CD8-positive, alpha-beta T cell (primary cell): ENCODE measurements at regions of chr10 and their contacts with region 1.

Region 1: DNA sequence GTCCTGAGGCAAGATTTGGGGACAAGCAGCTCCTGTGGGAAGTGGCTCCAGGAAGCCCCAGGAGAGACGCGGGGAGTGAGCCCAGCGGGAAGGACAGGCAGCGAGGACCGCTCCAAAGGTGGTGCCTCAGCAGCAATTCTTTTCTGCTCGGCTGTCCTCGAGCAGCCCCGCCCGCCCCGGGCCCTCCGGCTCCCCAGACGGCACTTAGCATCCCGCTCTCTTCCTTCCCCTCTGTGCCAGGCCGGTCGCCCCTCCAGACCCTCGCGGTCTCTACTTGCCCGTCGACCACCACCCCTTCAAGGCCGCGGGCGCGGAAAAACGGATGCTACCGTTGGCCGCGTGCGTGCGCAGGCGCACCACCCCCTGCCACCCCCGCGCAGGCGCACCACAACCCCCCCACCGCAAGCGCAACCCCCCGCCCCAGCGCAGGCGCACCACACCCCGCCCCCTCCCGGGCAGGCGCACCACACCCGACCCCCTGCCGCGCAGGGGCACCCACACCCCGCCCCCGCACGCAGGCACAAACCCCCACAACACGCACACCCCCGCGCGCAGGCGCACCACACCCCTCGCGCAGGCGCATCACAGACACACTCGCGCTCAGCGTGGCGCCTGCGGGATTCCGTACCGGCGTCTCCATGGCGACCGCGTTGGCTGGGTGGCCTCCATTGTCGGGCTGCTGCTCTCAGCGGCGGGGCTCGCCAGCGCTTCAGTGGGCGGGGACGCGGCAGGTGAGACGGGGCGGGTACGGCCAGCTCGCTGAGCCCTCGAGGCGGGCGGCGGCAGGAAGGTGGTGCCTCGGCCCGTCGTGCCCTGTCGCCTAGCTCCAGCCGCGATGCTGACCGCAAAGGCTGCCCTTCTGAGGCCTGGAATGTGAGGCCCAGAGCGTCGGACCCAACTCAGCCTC is at the start of gene LRRC27:
- DNase-seq: peak; percentile 99 to 100 (median 100)
- ATAC-seq: peak; percentile 90
- H3K4me3 ChIP-seq: peak within 1 kb of the TSS; percentile 77 to 90
- H3K4me3 Mint-ChIP-seq: peak within 1 kb of the TSS; percentile 84
- H3K27ac ChIP-seq: peak within 1 kb of the TSS; percentile 68 to 83
- H3K27ac Mint-ChIP-seq: peak within 1 kb of the TSS; percentile 91
- H3K4me1 ChIP-seq: peaks cover 31% of the 10 kb centered on the region
- H3K4me1 Mint-ChIP-seq: peaks cover 58% of the 10 kb centered on the region
- H3K27me3 ChIP-seq: no peaks in the 10 kb centered on the region
- H3K27me3 Mint-ChIP-seq: no peaks in the 10 kb centered on the region
- CTCF ChIP-seq: no peak
- total RNA-seq, gene LRRC27: 0.68 to 3.2 TPM

Region 2: GRCh38 chr10:131708225-131708880 is 623.4 kb before region 1 on chr10:
- CTCF ChIA-PET with region 1: no interaction called
- POLR2A ChIA-PET with region 1: no interaction called
- intact Hi-C with region 1: no loop called
- DNase-seq: no peak
- ATAC-seq: no peak
- H3K4me3 ChIP-seq: no peak overlapping the region
- H3K4me3 Mint-ChIP-seq: no peak overlapping the region
- H3K27ac ChIP-seq: no peak overlapping the region
- H3K27ac Mint-ChIP-seq: no peak overlapping the region
- H3K4me1 ChIP-seq: no peaks in the 10 kb centered on the region
- H3K4me1 Mint-ChIP-seq: no peaks in the 10 kb centered on the region
- H3K27me3 ChIP-seq: peaks cover 0 to 6% of the 10 kb centered on the region in 2 experiments
- H3K27me3 Mint-ChIP-seq: peaks cover 4% of the 10 kb centered on the region
- CTCF ChIP-seq: no peak

Region 3: DNA sequence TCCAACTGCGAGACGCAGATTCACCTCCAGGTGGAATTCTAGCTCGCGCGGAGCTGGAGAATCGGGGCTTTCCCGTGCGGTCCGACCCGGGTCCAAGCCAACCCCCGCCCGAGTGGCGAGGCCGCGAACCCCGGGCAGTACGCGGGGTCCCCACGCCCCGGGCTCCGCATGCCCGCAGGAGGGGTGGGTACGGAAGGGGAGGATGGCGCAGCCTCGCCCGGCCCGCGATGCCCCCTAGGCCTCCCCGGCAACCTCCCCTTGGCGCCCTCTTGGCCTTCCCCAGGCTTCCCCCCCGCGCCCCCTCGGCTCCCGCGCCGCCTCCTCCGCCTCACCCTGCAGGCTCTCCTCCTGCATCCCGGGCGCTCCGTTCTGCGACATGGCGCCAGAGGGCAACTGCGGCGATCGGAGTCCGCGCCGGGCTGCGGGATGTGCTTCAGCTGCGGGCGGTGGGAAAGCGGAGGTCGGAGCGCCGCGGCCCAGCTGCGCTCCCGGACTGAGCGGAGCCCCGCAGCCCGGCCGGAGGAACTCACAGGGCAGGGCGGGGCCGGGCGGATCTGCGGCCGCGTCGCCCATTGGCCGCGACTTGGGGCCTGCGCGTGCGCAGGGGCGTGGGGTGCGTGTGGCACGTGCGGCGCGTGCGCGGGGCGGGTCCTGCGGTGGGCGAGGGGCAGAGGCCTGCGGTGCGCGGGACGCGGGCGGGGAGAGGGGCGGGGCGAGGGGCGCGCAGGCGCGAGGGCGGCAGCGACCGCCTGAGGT is 350.2 kb before region 1 on chr10 and contains the start of gene BNIP3:
- CTCF ChIA-PET with region 1: no interaction called
- POLR2A ChIA-PET with region 1: no interaction called
- intact Hi-C with region 1: loop called (anchors 5 to 10 kb)
- DNase-seq: peak; percentile 84 to 98 (median 94)
- ATAC-seq: peak; percentile 90
- H3K4me3 ChIP-seq: peak within 1 kb of the TSS; percentile 66 to 83
- H3K4me3 Mint-ChIP-seq: peak within 1 kb of the TSS; percentile 84
- H3K27ac ChIP-seq: peak within 1 kb of the TSS; percentile 43 to 48
- H3K27ac Mint-ChIP-seq: peak within 1 kb of the TSS; percentile 81
- H3K4me1 ChIP-seq: peaks cover 47% of the 10 kb centered on the region
- H3K4me1 Mint-ChIP-seq: peaks cover 40% of the 10 kb centered on the region
- H3K27me3 ChIP-seq: no peaks in the 10 kb centered on the region
- H3K27me3 Mint-ChIP-seq: no peaks in the 10 kb centered on the region
- CTCF ChIP-seq: no peak
- total RNA-seq, gene BNIP3: 19.2 to 21.3 TPM

Region 4: GRCh38 chr10:132229834-132230556 is 101.8 kb before region 1 on chr10:
- CTCF ChIA-PET with region 1: no interaction called
- POLR2A ChIA-PET with region 1: no interaction called
- intact Hi-C with region 1: loop called in 1 of 2 experiments (anchors 1 kb)
- DNase-seq: peak in 7 of 9 experiments; percentile 26 to 66 (median 49)
- ATAC-seq: peak; percentile 82
- H3K4me3 ChIP-seq: peak overlapping the region; percentile 33 to 42
- H3K4me3 Mint-ChIP-seq: peak overlapping the region; percentile 85
- H3K27ac ChIP-seq: peak overlapping the region; percentile 27 to 43
- H3K27ac Mint-ChIP-seq: peak overlapping the region; percentile 93
- H3K4me1 ChIP-seq: peaks cover 25% of the 10 kb centered on the region
- H3K4me1 Mint-ChIP-seq: peaks cover 25% of the 10 kb centered on the region
- H3K27me3 ChIP-seq: no peaks in the 10 kb centered on the region
- H3K27me3 Mint-ChIP-seq: no peaks in the 10 kb centered on the region
- CTCF ChIP-seq: no peak

Region 5: GRCh38 chr10:132347211-132347930 is 15.6 kb after region 1 on chr10:
- CTCF ChIA-PET with region 1: no interaction called
- POLR2A ChIA-PET with region 1: no interaction called
- intact Hi-C with region 1: no loop called
- DNase-seq: no peak
- ATAC-seq: no peak
- H3K4me3 ChIP-seq: no peak overlapping the region
- H3K4me3 Mint-ChIP-seq: no peak overlapping the region
- H3K27ac ChIP-seq: no peak overlapping the region
- H3K27ac Mint-ChIP-seq: no peak overlapping the region
- H3K4me1 ChIP-seq: no peaks in the 10 kb centered on the region
- H3K4me1 Mint-ChIP-seq: no peaks in the 10 kb centered on the region
- H3K27me3 ChIP-seq: no peaks in the 10 kb centered on the region
- H3K27me3 Mint-ChIP-seq: no peaks in the 10 kb centered on the region
- CTCF ChIP-seq: no peak

Region 6: GRCh38 chr10:132396495-132397035 is 64.8 kb after region 1 on chr10:
- CTCF ChIA-PET with region 1: no interaction called
- POLR2A ChIA-PET with region 1: no interaction called
- intact Hi-C with region 1: loop called (anchors 1 to 2 kb)
- DNase-seq: peak in 8 of 9 experiments; percentile 49 to 87 (median 66)
- ATAC-seq: peak; percentile 72
- H3K4me3 ChIP-seq: peak overlapping the region; percentile 30 to 34
- H3K4me3 Mint-ChIP-seq: no peak overlapping the region
- H3K27ac ChIP-seq: peak overlapping the region; percentile 37 to 57
- H3K27ac Mint-ChIP-seq: no peak overlapping the region
- H3K4me1 ChIP-seq: peaks cover 12% of the 10 kb centered on the region
- H3K4me1 Mint-ChIP-seq: peaks cover 22% of the 10 kb centered on the region
- H3K27me3 ChIP-seq: no peaks in the 10 kb centered on the region
- H3K27me3 Mint-ChIP-seq: no peaks in the 10 kb centered on the region
- CTCF ChIP-seq: peak; percentile 17

Region 7: GRCh38 chr10:132418533-132419416 is 87.0 kb after region 1 on chr10:
- CTCF ChIA-PET with region 1: no interaction called
- POLR2A ChIA-PET with region 1: no interaction called
- intact Hi-C with region 1: no loop called
- DNase-seq: peak in 1 of 9 experiments; percentile 27
- ATAC-seq: no peak
- H3K4me3 ChIP-seq: no peak overlapping the region
- H3K4me3 Mint-ChIP-seq: no peak overlapping the region
- H3K27ac ChIP-seq: no peak overlapping the region
- H3K27ac Mint-ChIP-seq: no peak overlapping the region
- H3K4me1 ChIP-seq: peaks cover 40% of the 10 kb centered on the region
- H3K4me1 Mint-ChIP-seq: peaks cover 37% of the 10 kb centered on the region
- H3K27me3 ChIP-seq: no peaks in the 10 kb centered on the region
- H3K27me3 Mint-ChIP-seq: no peaks in the 10 kb centered on the region
- CTCF ChIP-seq: no peak